Motor neuron (in vitro differentiated cells): ENCODE measurements at regions of chrX and their contacts with region 1.

Region 1: DNA sequence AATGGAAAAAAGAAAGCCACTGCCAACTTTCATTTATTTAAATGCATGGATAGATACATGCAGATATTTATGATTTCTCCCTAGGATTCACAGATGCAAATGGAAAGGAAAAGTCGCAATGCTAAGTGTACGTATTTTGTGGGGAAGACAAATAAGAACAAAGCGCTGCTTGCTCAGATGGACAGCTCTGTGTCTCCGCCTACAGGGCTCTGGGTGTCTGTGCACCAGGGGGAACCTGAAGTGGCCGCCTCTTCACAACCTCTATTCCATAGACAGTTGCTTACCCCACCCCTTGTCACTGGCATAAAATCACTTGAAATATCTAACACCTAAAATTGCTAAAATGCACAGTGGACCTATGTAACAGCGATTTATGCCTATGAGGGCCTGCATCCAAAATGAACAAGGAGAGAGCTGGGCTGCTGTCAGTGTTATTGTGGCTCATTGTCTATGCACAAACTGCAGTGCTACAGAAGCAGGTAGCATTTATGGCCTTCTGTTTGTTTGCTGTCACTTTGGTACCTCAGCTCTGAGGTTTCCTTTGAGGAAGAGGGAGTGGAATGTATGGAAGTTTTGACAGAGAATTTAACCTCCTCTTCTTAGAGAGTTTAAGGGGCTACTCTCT is 58.6 kb upstream of the PAGE1 start:
- ATAC-seq: peak; percentile 56 to 85 (median 71)
- H3K4me3 ChIP-seq: no peak overlapping the region
- H3K27ac ChIP-seq: no peak overlapping the region
- H3K4me1 ChIP-seq: peaks cover 0 to 5% of the 10 kb centered on the region in 2 donors

Region 2: GRCh38 chrX:49850028-49850427 is 95.7 kb after region 1 on chrX:
- in situ Hi-C with region 1: loop called in 1 of 9 experiments (anchors 25 kb)
- ATAC-seq: peak in 2 of 8 experiments; percentile 40 to 52
- H3K4me3 ChIP-seq: no peak overlapping the region
- H3K27ac ChIP-seq: no peak overlapping the region
- H3K4me1 ChIP-seq: peaks cover 0 to 3% of the 10 kb centered on the region in 2 donors